ENCODE measurements at regions of chr14 and their contacts with region 1.

Region 1: GRCh38 chr14:74739293-74740030 is 23.7 kb upstream of the YLPM1 start:
- DNase-seq: no peak
- H3K4me3 ChIP-seq: no peak overlapping the region
- CTCF ChIP-seq: no peak

Region 2: DNA sequence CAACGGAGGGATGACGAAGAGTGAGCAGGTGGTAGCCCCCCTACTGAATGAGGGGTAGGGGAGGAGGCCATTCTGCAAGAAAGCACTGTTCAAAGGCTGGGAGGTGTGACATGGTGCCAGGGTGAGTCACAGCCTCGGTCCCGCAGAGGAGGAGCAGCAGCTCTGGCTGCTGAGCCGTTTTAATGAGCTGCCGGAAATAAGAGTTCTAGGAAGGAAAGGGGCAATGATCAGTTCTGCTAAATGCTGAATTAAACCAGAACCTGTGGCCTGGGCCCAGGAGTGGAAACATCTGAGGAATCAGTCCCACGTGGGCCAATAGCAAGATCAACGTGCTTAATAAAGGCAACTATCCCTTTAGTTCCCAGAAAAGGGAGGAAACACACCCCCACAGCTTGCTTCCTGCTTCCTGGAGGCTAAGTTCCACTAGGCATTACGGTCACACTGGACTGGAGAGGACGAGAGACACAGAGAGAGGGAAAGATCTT is 440.4 kb before region 1 on chr14:
- in situ Hi-C with region 1: loop called (anchors 5 kb)
- DNase-seq: peak; percentile 18
- H3K4me3 ChIP-seq: no peak overlapping the region
- CTCF ChIP-seq: no peak

Region 3: GRCh38 chr14:74784634-74785033 is 45.2 kb after region 1 on chr14:
- in situ Hi-C with region 1: loop called (anchors 5 kb)
- DNase-seq: no peak
- H3K4me3 ChIP-seq: no peak overlapping the region
- CTCF ChIP-seq: no peak

Measured in astrocyte of the cerebellum (primary cell).